ENCODE measurements at regions of chr2 and their contacts with region 1.

Region 1: DNA sequence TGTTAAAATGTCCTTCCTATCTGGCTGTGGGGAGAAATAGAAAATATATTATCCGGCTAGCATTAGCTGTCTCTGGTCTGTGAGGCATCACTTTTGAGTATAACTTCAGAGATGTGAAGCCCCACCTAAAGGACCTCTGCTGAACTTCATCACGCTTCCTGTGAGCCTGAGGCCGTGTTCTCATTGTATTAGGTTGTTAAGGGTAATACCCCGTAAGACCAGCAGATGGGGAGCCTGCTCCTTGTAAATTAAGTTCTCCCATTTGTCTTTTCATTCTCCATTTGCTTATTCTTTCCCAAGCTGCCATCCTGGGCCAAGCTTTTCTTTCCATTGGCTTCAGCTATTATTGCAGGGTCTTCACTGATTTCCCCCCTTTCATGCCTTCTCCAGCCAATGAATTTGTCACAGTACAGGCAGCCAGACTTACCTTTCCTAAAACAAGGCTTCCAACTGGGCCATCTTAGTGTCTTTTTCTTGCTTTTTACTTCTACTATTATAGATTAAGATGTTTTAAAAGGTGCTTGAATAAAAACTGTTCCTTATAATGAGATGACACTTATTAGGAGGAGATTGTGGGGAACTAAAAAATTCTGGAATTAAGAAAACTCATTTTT is 12.4 kb downstream of the NIF3L1 start:
- DNase-seq: peak; percentile 92
- H3K4me3 ChIP-seq: no peak overlapping the region
- H3K27ac ChIP-seq: no peak overlapping the region
- H3K4me1 ChIP-seq: peaks cover 5% of the 10 kb centered on the region
- CTCF ChIP-seq: peak; percentile 95

Region 2: GRCh38 chr2:200877443-200877842 is 24.1 kb before region 1 on chr2:
- CTCF ChIA-PET with region 1: no interaction called
- POLR2A ChIA-PET with region 1: no interaction called
- intact Hi-C with region 1: no loop called
- DNase-seq: no peak
- H3K4me3 ChIP-seq: no peak overlapping the region
- H3K27ac ChIP-seq: no peak overlapping the region
- H3K4me1 ChIP-seq: no peaks in the 10 kb centered on the region
- CTCF ChIP-seq: no peak

Region 3: GRCh38 chr2:200985799-200986198 is 84.2 kb after region 1 on chr2:
- CTCF ChIA-PET with region 1: no interaction called
- POLR2A ChIA-PET with region 1: no interaction called
- intact Hi-C with region 1: no loop called
- DNase-seq: no peak
- H3K4me3 ChIP-seq: no peak overlapping the region
- H3K27ac ChIP-seq: no peak overlapping the region
- H3K4me1 ChIP-seq: no peaks in the 10 kb centered on the region
- CTCF ChIP-seq: no peak

Region 4: GRCh38 chr2:201071479-201072200 is 170.1 kb after region 1 on chr2 and contains the starts of genes HYCC2 and NDUFB3:
- CTCF ChIA-PET with region 1: interaction called, 6 read pairs
- POLR2A ChIA-PET with region 1: interaction called, 4 read pairs
- intact Hi-C with region 1: loop called (anchors 1 kb)
- DNase-seq: peak; percentile 96
- H3K4me3 ChIP-seq: peak within 1 kb of the TSS; percentile 74
- H3K27ac ChIP-seq: peak within 1 kb of the TSS; percentile 58
- H3K4me1 ChIP-seq: peaks cover 39% of the 10 kb centered on the region
- CTCF ChIP-seq: peak; percentile 53; the same call in 1 of the 2 replicates
- total RNA-seq, gene HYCC2: 8.6 and 8.8 TPM in 2 replicates
- total RNA-seq, gene NDUFB3: 90.5 and 134 TPM in 2 replicates

Measured in OCI-LY7 (cell line).